IMR-90 (cell line): ENCODE measurements at regions of chr2 and their contacts with region 1.

Region 1: GRCh38 chr2:219104107-219105035 is 43.6 kb upstream of the IHH start:
- DNase-seq: peak; percentile 32
- ATAC-seq: peak; percentile 70
- H3K4me3 ChIP-seq: no peak overlapping the region
- H3K27ac ChIP-seq: no peak overlapping the region
- H3K4me1 ChIP-seq: no peaks in the 10 kb centered on the region
- H3K27me3 ChIP-seq: no peaks in the 10 kb centered on the region
- CTCF ChIP-seq: peak; percentile 65
- POLR2A ChIP-seq: no peak
- RAD21 ChIP-seq: peak; percentile 48; the same call in 1 of the 2 replicates

Region 2: DNA sequence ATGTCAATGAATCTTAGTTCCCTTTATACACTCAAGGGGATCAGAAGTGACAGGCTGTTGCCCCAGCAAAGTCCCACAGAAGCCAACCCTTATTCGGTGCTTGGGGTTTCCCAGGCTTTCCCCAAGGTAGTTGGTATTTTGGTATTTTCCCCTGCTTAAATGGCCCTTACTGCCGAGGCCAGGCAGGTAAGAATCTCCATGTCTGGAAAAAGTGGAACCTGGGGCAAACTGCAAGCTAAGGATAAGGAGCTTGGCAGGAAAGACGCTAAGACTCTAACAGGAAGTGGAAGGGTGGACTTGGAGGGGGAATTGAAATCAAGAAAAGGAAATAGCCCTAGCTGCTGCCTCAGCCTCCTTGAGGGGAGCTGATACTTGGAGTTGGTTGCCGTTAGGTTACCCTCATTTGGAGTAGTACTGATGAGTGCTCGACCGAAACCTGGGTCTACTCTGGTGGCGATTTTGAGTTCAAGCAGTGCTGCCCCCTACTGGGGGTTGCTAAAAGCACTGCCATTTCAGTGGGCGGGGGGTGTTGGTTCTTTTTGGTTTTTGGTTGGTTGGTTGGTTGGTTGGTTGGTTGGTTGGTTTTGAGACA is 846.9 kb before region 1 on chr2:
- CTCF ChIA-PET with region 1: no interaction called
- POLR2A ChIA-PET with region 1: interaction called, 14 read pairs
- dilution Hi-C with region 1: no loop called
- in situ Hi-C with region 1: no loop called
- intact Hi-C with region 1: no loop called
- DNase-seq: no peak
- ATAC-seq: no peak
- H3K4me3 ChIP-seq: no peak overlapping the region
- H3K27ac ChIP-seq: no peak overlapping the region
- H3K4me1 ChIP-seq: peaks cover 14% of the 10 kb centered on the region
- H3K27me3 ChIP-seq: no peaks in the 10 kb centered on the region
- CTCF ChIP-seq: peak; percentile 51
- POLR2A ChIP-seq: no peak
- RAD21 ChIP-seq: no peak

Region 3: DNA sequence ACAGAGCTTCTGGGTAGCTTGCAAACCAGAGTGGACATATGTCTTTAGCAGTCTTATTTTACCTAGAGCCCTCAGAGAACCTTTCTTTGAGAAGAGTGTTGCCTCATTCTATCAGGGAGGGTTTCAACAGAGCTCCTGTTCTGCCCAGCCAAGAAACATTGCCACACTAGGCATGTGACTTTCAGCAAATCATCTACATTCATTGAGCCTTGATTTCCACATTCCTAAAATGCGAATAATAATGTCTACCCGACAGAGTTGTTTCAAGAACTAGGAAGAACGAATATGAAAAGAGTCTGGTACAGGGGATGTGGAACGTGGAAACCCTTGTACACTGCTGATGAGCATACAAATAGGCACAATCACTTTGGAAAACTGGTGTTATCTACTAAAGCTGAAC is 264.9 kb before region 1 on chr2:
- CTCF ChIA-PET with region 1: no interaction called
- POLR2A ChIA-PET with region 1: no interaction called
- dilution Hi-C with region 1: no loop called
- in situ Hi-C with region 1: no loop called
- intact Hi-C with region 1: no loop called
- DNase-seq: peak; percentile 62
- ATAC-seq: no peak; the same call in none of the 2 replicates
- H3K4me3 ChIP-seq: no peak overlapping the region
- H3K27ac ChIP-seq: no peak overlapping the region
- H3K4me1 ChIP-seq: no peaks in the 10 kb centered on the region; the same call in 1 of the 2 replicates
- H3K27me3 ChIP-seq: peaks cover 12% of the 10 kb centered on the region
- CTCF ChIP-seq: no peak
- POLR2A ChIP-seq: no peak
- RAD21 ChIP-seq: no peak